AG04450 (cell line): ENCODE measurements at regions of chr12 and their contacts with region 1.

Region 1: DNA sequence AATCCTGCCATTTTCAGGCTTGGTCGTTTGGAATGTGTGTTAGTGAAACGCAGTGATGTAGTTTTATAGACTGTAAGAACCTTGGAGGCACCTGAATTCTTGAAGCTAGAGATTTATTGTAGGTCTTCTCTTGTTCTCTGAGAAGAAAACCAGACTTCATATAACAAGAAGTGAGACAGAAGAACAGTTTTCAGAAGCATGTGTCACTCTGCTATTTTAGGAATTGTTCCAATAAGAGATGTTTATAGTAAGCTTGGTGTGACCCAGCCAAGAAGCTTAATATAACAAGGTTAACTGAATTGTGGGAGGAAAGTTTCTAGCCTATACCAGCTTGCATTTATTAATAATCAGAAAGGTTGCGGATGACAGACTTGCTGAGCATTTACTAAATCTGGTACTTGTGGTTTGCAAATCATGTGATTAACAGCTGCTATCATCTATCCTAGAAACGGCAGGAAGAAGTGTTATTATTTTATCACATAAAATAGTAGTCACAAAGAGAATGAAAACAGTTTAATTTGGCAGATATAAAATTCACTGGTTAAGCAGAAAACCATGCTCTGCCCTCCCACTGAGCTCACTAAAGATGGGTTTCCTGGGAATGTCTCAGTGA is 49.2 kb upstream of the BCAT1 start:
- DNase-seq: peak; percentile 58
- H3K4me3 ChIP-seq: no peak overlapping the region
- H3K27ac ChIP-seq: no peak overlapping the region
- H3K27me3 ChIP-seq: no peaks in the 10 kb centered on the region
- CTCF ChIP-seq: no peak

Region 2: GRCh38 chr12:25130741-25131188 is 132.7 kb after region 1 on chr12:
- CTCF ChIA-PET with region 1: interaction called, 131 read pairs
- POLR2A ChIA-PET with region 1: no interaction called
- DNase-seq: peak; percentile 16
- H3K4me3 ChIP-seq: no peak overlapping the region
- H3K27ac ChIP-seq: no peak overlapping the region
- H3K27me3 ChIP-seq: no peaks in the 10 kb centered on the region
- CTCF ChIP-seq: peak; percentile 61

Region 3: GRCh38 chr12:25151476-25151875 is 153.4 kb after region 1 on chr12:
- CTCF ChIA-PET with region 1: interaction called, 24 read pairs
- POLR2A ChIA-PET with region 1: interaction called, 5 read pairs
- DNase-seq: peak; percentile 98
- H3K4me3 ChIP-seq: no peak overlapping the region
- H3K27ac ChIP-seq: peak overlapping the region; percentile 77
- H3K27me3 ChIP-seq: no peaks in the 10 kb centered on the region
- CTCF ChIP-seq: no peak